ENCODE measurements at regions of chr6 and their contacts with region 1.

Region 1: GRCh38 chr6:158660333-158660754 is 10.5 kb downstream of the SYTL3 start:
- DNase-seq: peak; percentile 61
- H3K4me3 Mint-ChIP-seq: no peak overlapping the region
- H3K27ac Mint-ChIP-seq: peak overlapping the region; percentile 77
- H3K4me1 Mint-ChIP-seq: peaks cover 55% of the 10 kb centered on the region
- H3K27me3 Mint-ChIP-seq: no peaks in the 10 kb centered on the region

Region 2: GRCh38 chr6:158644231-158645063 is 15.9 kb before region 1 on chr6 and contains the start of gene DYNLT1:
- CTCF ChIA-PET with region 1: interaction called, 13 read pairs
- POLR2A ChIA-PET with region 1: no interaction called
- DNase-seq: peak; percentile 86
- H3K4me3 Mint-ChIP-seq: peak within 1 kb of the TSS; percentile 95
- H3K27ac Mint-ChIP-seq: peak within 1 kb of the TSS; percentile 91
- H3K4me1 Mint-ChIP-seq: peaks cover 73% of the 10 kb centered on the region
- H3K27me3 Mint-ChIP-seq: no peaks in the 10 kb centered on the region
- total RNA-seq, gene DYNLT1: 81.4 to 102 TPM

Region 3: GRCh38 chr6:158677906-158678578 is 17.7 kb after region 1 on chr6:
- CTCF ChIA-PET with region 1: interaction called, 19 read pairs
- POLR2A ChIA-PET with region 1: no interaction called
- DNase-seq: no peak
- H3K4me3 Mint-ChIP-seq: no peak overlapping the region
- H3K27ac Mint-ChIP-seq: no peak overlapping the region
- H3K4me1 Mint-ChIP-seq: peaks cover 2% of the 10 kb centered on the region
- H3K27me3 Mint-ChIP-seq: no peaks in the 10 kb centered on the region

Measured in activated CD4-positive, alpha-beta T cell treated with anti-CD3 and anti-CD28 coated beads, Interleukin-2, amount 10 ng/mL, durations not matched to agents 7 days and 5 days (primary cell).